Posterior vena cava (tissue), 2 donors: ENCODE measurements at regions of chr9 and their contacts with region 1.

Region 1: GRCh38 chr9:105087910-105088888 is 156.3 kb upstream of the SLC44A1 start:
- DNase-seq: no peak

Region 2: GRCh38 chr9:104608336-104608735 is 479.9 kb before region 1 on chr9:
- intact Hi-C with region 1: no loop called
- DNase-seq: no peak

Region 3: GRCh38 chr9:105039175-105039799 is 48.9 kb before region 1 on chr9:
- intact Hi-C with region 1: loop called in 1 of 2 experiments (anchors 1 kb)
- DNase-seq: no peak